Thyroid gland (tissue), 4 donors: ENCODE measurements at regions of chr6 and their contacts with region 1.

Region 1: DNA sequence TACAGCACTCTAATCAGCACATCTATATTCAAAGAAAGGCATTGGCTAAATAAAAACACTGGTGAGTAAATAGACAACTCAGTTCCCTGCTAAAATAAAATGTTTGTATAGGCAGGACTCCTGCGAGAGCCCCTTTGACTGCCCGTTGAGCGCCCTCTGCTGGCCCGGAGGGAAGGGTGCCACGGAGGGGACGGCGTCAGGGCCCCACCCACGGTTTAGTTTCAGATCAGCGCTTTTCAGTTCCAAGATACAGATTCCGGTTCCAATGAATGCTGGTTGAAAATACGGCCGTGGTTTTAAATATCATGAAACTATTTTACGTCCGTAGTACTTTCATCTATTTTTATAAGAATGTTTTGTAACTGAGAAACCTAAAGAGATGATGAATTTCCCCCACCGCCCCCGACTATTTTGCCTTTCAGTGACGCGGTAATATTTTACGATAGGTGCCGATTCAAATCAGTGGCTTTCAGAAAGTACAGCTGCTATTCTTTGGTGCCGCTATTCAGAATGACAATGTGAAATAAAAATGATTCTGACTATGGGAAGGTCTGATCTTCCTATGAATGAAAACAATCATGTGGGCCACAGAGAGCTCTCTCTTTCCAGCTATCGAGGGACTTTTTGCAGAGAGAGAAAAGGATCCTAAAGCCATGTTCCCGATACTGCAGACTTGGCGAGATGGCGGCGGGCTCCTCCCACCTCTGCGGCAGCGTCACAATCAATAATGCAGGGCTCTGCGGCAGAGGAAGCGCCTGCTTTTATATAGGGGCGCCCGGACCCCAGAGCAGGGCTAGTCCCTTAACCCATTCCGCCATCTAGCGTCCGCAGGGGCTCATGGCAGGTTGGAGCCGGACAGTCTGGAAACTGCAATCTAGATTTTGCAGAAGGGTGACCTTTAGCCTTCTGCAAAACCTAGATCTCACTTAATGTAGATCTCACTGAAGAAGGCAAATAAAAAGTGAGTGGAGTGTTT is 10.6 kb upstream of the CCN6 start:
- DNase-seq: peak; percentile 79 to 84
- H3K4me3 ChIP-seq: peak overlapping the region; percentile 1 to 40 (median 14)
- H3K27ac ChIP-seq: peak overlapping the region; percentile 28 to 71 (median 62)
- H3K4me1 ChIP-seq: peaks cover 2 to 4% of the 10 kb centered on the region in 2 donors
- H3K27me3 ChIP-seq: no peaks in the 10 kb centered on the region
- CTCF ChIP-seq: peak; percentile 89 to 96 (median 92)
- POLR2A ChIP-seq: peak in 1 of 2 donors; percentile 25

Region 2: DNA sequence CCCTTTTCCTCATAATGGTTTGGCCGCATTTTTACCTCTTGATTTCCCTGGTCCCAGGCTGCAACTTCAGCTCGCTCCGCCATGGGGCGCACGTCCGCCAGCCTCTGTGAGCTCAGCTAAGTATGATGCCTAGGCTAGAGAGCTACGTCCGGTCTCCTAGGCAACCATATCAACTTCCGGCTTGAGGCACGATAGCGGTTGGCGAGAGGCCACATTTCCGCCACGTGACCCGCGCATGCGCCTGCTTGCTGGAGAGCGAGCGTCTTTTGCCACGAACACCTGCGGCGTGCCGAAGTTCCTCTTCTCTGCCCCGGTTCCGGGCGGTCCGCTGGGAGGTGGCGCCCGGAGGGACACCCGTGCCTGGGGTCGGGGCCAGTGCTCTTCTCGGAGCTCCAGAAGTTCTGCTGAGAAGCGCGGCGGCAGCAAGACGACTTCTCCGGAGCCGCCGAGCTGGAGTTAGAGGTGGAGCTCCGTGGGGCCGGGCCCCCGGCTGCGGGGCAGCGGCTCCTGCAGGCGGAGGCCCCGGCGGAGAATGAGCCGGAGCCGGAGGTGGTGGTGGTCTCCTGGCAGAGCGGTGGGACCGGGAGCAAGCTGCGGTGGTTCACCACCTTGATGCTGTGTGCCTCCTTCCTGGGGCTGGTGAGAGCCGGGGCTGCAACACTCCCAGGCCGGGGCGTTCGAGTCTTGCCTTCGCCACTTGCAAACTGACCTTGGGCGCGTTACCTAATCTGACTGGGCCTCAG is 784.1 kb before region 1 on chr6:
- intact Hi-C with region 1: loop called (anchors 10 kb)
- DNase-seq: peak; percentile 99
- H3K4me3 ChIP-seq: peak overlapping the region; percentile 56 to 96 (median 71)
- H3K27ac ChIP-seq: peak overlapping the region; percentile 74 to 80 (median 79)
- H3K4me1 ChIP-seq: peaks cover 9 to 11% of the 10 kb centered on the region in 2 donors
- H3K27me3 ChIP-seq: no peaks in the 10 kb centered on the region
- CTCF ChIP-seq: peak; percentile 83 to 99 (median 97)
- POLR2A ChIP-seq: peak in 1 of 2 donors; percentile 90

Region 3: GRCh38 chr6:111709615-111710398 is 333.5 kb before region 1 on chr6:
- intact Hi-C with region 1: loop called (anchors 5 kb)
- DNase-seq: peak; percentile 59 to 76
- H3K4me3 ChIP-seq: no peak overlapping the region
- H3K27ac ChIP-seq: peak overlapping the region in 1 of 3 donors; percentile 2
- H3K4me1 ChIP-seq: peaks cover 4 to 20% of the 10 kb centered on the region in 2 donors
- H3K27me3 ChIP-seq: no peaks in the 10 kb centered on the region
- CTCF ChIP-seq: peak; percentile 41 to 97 (median 75)
- POLR2A ChIP-seq: no peak

Region 4: DNA sequence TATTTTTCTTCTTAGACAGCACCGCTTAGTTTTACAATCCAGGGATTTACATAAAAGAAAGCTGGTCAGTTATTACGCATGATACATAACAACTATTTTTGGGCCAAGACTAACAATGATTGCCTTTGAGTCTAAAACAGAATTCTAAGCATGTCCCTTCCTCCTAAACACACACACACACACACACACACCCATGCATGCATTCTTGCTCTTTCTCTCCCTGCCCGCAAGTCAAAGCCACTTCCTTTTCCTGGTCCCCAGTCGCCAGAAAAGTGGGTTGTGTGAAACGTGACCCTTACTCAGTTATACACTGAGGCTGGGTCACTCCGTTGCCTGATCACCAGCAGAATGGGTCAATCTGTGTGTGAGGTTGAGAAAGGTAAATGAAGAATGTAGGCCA is 201.5 kb before region 1 on chr6:
- intact Hi-C with region 1: no loop called
- DNase-seq: peak in 1 of 2 donors; percentile 5
- H3K4me3 ChIP-seq: no peak overlapping the region
- H3K27ac ChIP-seq: peak overlapping the region in 1 of 3 donors; percentile 27
- H3K4me1 ChIP-seq: peaks cover 0 to 50% of the 10 kb centered on the region in 2 donors
- H3K27me3 ChIP-seq: no peaks in the 10 kb centered on the region
- CTCF ChIP-seq: no peak
- POLR2A ChIP-seq: no peak

Region 5: GRCh38 chr6:112004201-112005012 is 38.9 kb before region 1 on chr6:
- intact Hi-C with region 1: loop called (anchors 5 kb)
- DNase-seq: no peak
- H3K4me3 ChIP-seq: no peak overlapping the region
- H3K27ac ChIP-seq: peak overlapping the region in 1 of 3 donors; percentile 10
- H3K4me1 ChIP-seq: no peaks in the 10 kb centered on the region
- H3K27me3 ChIP-seq: no peaks in the 10 kb centered on the region
- CTCF ChIP-seq: no peak
- POLR2A ChIP-seq: no peak